Left colon (tissue), 2 donors: ENCODE measurements at regions of chr2 and their contacts with region 1.

Region 1: GRCh38 chr2:162301151-162301804 is 17.2 kb downstream of the IFIH1 start:
- DNase-seq: peak; percentile 26 to 28
- ATAC-seq: peak; percentile 70

Region 2: DNA sequence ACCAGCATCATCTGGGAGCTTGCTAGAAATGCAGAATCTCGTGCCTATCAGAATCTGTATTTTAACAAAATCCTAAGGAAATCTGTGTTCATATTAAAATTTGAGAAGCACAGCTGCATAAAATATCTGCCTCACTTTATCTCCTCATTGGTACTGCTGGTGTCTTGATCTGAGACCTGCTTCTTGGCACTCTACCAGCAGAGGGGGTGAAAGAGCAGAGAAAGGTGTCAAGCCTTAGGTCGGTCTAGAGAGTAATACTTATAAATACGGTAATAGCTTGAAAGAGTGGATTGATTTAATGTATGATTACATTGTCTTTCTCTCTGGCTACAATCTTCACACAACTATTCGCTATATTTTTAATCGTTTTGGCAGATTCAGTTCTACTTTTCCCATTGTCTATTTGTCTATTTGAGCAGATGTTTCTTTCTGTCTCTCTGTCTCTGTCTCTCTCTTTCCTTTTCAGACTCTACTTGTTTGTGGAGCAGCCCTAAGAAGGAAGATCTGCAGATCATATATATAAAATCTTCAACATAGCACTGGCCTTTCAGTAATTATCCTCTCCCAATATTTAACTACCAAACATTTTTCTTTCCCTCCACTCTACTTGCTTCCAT is 147.6 kb before region 1 on chr2:
- intact Hi-C with region 1: loop called (anchors 10 kb)
- DNase-seq: peak; percentile 35 to 71
- ATAC-seq: peak; percentile 90

Region 3: DNA sequence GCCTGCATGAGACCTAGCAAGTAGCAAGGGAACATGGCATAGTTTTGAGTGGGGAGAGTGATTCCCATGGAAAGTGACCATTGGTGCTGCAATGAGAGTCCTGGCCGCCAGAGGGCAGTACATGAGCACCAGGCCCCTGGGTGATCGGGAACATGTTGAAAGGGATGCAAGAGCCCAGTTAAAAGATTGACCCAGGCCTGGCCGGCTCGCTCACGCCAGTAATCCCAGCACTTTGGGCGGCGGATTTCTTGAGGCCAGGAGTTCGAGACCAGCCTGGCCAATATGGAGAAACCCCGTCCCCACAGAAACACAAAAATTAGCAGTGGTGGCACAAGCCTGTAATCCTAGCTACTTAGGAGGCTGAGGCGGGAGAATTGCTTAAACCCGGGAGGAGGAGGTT is 80.2 kb before region 1 on chr2:
- intact Hi-C with region 1: loop called in 1 of 2 experiments (anchors 2 kb)
- DNase-seq: peak; percentile 34 to 53
- ATAC-seq: peak; percentile 52